Heart left ventricle (tissue), 16 donors: ENCODE measurements at regions of chr17 and their contacts with region 1.

Region 1: DNA sequence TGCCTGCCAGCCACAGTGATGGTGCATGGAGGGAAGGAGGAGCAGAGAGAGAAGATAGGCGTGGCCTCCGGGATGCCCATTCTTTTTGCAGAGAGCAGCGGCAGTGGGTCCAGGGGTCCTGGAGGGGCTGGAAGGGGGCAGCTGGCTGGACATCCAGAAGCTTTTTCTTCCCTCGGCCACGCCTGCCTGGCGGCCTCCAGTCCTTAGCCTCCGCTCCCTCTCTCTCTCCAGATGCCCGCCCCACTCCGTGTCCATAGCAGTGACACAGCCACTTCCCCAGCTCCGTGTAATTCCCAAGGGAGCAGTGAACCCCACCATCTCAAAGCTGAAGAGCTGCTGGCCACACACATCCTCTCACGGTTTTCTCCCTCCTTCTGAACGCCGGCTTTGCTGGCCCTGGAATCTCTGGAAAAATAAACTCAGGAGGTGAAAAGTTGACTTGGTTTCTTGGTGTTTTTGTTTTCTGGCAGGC is 26.3 kb upstream of the CDC42EP4 start:
- DNase-seq: no peak
- ATAC-seq: peak in 1 of 4 donors; percentile 9
- H3K4me3 ChIP-seq: no peak overlapping the region
- H3K27ac ChIP-seq: peak overlapping the region in 7 of 12 donors; percentile 34 to 91 (median 40)
- H3K4me1 ChIP-seq: peaks cover 0 to 28% (median 17%) of the 10 kb centered on the region in 12 donors
- H3K27me3 ChIP-seq: no peaks in the 10 kb centered on the region
- CTCF ChIP-seq: no peak
- POLR2A ChIP-seq: no peak

Region 2: DNA sequence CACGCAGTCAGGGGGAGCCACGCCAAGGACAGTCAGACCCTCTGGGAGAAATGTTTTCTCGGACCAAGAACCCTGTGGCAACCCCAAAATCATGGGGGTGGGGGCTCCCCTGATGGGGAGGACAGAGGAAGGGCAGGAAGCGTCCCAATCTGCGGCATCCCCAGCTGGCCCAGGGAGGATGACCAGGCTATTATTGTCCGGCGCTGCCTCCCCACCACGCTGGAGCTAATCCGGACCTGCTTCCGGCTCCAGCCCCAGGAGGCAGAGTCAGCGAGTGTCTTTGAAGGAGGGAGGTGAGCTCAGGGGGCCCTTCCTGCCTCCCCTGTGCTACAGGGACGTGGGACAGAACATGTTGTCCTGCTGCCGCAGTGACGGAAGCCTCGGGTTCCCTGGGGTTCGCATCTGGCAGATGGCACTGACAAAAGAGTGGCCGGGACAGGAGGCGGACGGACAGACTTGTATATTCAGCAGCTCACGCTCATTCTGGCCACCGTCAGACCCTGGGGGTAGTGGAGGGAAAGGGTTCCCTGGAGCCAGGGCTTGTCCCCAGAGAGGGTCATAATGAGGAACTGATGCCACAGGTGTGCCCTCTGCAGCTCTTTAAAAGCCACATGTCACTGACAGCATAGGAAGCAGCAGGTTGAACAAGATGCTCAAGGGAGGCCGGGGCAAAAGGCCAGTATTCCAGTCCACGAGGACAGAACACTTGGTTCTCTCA is 28.0 kb after region 1 on chr17:
- intact Hi-C with region 1: loop called in 1 of 10 experiments (anchors 2 kb)
- DNase-seq: peak; percentile 65 to 75 (median 73)
- ATAC-seq: peak; percentile 53 to 87 (median 69)
- H3K4me3 ChIP-seq: peak overlapping the region in 7 of 12 donors; percentile 4 to 26 (median 19)
- H3K27ac ChIP-seq: peak overlapping the region; percentile 50 to 82 (median 73)
- H3K4me1 ChIP-seq: peaks cover 0 to 35% (median 19%) of the 10 kb centered on the region in 12 donors
- H3K27me3 ChIP-seq: no peaks in the 10 kb centered on the region
- CTCF ChIP-seq: no peak
- POLR2A ChIP-seq: peak in 1 of 2 donors; percentile 47